Activated CD4-positive, alpha-beta memory T cell treated with anti-CD3 and anti-CD28 coated beads for 36 hours (primary cell): ENCODE measurements at regions of chr9 and their contacts with region 1.

Region 1: GRCh38 chr9:97900738-97901565 is 21.3 kb downstream of the TRMO start:
- DNase-seq: no peak
- H3K4me3 Mint-ChIP-seq: no peak overlapping the region
- H3K27ac Mint-ChIP-seq: no peak overlapping the region
- H3K4me1 Mint-ChIP-seq: peaks cover 55% of the 10 kb centered on the region
- H3K27me3 Mint-ChIP-seq: no peaks in the 10 kb centered on the region

Region 2: DNA sequence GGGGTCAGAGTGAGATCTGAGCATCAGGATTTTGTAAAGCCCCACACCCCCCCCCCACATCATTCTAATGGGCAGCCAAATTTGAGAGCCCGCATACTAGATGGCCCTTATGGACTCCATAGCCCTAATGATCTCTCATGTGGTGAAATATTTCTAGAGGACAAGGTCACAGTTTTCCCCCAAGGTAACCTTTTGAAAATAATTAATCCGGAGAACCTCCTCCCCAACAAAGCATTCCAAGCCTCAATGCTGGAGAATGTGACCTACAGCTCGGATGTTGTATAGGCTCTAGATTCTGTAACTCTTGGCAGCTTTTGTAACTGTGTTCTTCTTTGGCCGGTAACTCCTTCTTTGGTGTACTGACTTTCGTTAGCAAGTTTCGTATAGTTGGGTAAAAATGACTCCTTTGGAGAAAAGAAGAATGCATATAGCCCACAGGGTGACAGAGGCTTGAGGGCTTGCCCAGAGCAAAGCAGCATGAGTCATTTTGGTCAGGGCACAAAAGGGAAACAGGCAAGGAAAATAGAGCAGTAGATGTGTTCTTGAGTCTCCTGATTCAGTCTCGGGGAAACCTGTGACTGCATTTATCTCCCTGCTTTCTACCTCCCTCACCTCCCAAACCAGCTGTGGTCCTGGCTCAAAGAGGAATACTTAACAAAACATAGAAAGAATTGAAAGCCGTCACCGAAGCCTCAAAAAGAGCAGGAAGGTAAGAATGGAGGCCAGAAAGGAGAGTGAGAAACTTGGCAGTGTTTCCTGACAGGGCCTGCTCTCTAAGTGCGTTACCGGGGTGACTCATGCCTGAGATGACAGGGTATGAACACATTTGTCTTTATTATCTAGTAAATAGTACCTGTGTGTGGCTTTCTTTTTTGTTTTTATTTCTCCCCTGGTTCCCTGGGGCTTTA is 197.3 kb before region 1 on chr9:
- CTCF ChIA-PET with region 1: interaction called, 21 read pairs
- POLR2A ChIA-PET with region 1: no interaction called
- intact Hi-C with region 1: no loop called
- DNase-seq: peak; percentile 59
- H3K4me3 Mint-ChIP-seq: peak overlapping the region; percentile 40
- H3K27ac Mint-ChIP-seq: peak overlapping the region; percentile 91
- H3K4me1 Mint-ChIP-seq: peaks cover 35% of the 10 kb centered on the region
- H3K27me3 Mint-ChIP-seq: peaks cover 6% of the 10 kb centered on the region

Region 3: DNA sequence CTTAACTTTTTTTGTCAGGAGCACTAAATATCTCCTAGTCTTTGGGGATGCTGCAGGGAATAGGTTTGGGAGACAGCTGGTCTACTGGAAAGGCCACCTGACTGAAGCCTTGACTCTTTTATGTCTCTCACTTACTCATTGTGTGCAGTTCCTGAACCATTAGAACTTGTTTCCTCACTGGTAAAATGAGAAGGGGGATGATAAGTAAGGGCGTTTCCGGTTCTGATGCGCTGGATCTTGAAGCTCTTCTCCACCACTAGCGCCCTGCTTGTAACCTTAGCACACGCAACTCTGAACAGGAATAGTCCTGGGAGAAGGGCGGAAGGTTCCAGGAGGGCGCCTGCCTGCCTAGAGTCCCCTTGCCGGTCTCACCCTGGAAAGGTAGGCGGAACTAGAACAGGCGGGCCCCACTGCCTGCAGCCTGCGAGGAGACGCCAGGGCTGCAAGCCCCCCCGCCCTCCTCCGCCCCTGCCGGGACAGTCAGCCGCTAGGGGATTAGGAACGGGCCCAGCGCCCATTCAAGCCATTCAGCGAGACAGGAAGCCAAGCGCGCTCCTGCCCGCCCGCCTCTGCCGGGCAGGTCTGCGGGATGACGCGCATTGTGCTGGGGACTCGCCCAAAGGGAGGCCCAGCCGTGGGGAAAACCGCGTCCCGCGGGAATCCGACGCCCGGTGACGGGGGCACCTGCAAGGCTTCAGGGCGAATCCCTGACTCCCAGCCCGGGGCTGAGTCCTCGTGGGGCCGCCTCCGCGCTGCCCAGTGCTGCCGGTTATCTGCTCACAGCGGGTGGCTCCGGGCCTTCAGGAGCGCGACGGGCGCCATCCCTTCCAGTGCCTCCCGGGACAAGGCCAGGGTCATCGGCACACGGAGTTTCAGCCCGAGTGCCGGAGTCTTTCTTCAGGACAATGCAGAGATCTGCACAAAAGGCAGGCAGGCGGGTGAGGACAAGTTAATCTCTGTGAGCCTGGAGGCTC is 159.8 kb before region 1 on chr9:
- CTCF ChIA-PET with region 1: no interaction called
- POLR2A ChIA-PET with region 1: no interaction called
- intact Hi-C with region 1: no loop called
- DNase-seq: peak; percentile 54
- H3K4me3 Mint-ChIP-seq: peak overlapping the region; percentile 39
- H3K27ac Mint-ChIP-seq: no peak overlapping the region
- H3K4me1 Mint-ChIP-seq: peaks cover 6% of the 10 kb centered on the region
- H3K27me3 Mint-ChIP-seq: peaks cover 58% of the 10 kb centered on the region

Region 4: DNA sequence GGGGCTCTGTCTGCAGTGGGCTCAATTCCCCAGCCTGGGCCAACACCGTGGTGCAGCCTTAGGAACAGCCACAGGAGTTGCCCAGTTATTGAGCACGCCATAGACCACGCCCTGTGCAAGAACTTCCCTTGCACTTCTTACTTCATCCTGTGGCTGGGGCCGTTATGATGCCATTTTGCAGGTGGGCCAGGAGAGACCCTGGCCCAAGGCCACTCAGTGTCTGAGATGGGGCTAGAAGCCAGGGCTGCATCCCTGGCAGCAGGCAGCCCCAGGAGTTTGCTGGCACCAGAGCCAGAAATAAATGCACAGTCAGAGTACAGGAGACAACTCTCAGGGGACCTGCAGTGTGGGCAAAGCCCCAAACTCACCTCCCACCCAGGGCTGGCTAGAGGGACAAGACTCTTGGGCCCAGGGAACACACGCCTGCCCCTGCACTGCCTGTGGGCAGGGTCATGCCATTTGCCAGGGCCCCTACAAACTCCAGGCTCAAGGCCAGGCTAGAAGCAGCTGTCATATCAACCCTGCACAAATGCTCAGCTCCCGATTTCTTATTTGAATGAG is 284.7 kb after region 1 on chr9:
- CTCF ChIA-PET with region 1: no interaction called
- POLR2A ChIA-PET with region 1: no interaction called
- intact Hi-C with region 1: no loop called
- DNase-seq: no peak
- H3K4me3 Mint-ChIP-seq: no peak overlapping the region
- H3K27ac Mint-ChIP-seq: no peak overlapping the region
- H3K4me1 Mint-ChIP-seq: peaks cover 19% of the 10 kb centered on the region
- H3K27me3 Mint-ChIP-seq: no peaks in the 10 kb centered on the region